AG04449 (cell line): ENCODE measurements at regions of chr11 and their contacts with region 1.

Region 1: GRCh38 chr11:2930704-2931428 is 1.6 kb upstream of the PHLDA2 start:
- DNase-seq: no peak
- H3K4me3 ChIP-seq: peak overlapping the region; percentile 77
- CTCF ChIP-seq: peak; percentile 75

Region 2: DNA sequence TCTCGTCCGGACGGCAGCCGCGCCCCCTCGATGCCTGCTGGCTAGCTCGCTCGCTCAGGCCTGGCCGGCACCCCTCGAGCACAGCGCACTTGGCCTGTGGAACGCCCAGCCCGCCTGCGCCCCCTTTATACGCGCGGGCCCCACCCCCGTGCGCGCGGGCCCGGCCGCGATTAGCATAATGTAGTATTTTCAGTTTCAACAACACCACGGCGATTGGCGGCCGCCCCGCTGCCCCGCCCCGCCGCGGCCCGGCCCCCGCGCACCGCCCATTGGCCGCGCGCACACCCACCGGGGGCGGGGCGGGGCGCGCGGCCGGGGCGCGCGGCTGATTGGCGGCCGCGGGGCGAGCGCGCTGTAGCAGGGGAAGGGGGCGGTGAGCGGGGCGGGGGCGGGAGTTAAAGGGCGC is 45.2 kb before region 1 on chr11 and contains the start of gene CDKN1C:
- CTCF ChIA-PET with region 1: interaction called, 13 read pairs
- POLR2A ChIA-PET with region 1: no interaction called
- DNase-seq: no peak
- H3K4me3 ChIP-seq: peak within 1 kb of the TSS; percentile 63
- CTCF ChIP-seq: no peak

Region 3: GRCh38 chr11:2901854-2902783 is 28.7 kb before region 1 on chr11:
- CTCF ChIA-PET with region 1: interaction called, 5 read pairs
- POLR2A ChIA-PET with region 1: interaction called, 12 read pairs
- DNase-seq: peak; percentile 42
- H3K4me3 ChIP-seq: peak overlapping the region; percentile 75
- CTCF ChIP-seq: no peak

Region 4: DNA sequence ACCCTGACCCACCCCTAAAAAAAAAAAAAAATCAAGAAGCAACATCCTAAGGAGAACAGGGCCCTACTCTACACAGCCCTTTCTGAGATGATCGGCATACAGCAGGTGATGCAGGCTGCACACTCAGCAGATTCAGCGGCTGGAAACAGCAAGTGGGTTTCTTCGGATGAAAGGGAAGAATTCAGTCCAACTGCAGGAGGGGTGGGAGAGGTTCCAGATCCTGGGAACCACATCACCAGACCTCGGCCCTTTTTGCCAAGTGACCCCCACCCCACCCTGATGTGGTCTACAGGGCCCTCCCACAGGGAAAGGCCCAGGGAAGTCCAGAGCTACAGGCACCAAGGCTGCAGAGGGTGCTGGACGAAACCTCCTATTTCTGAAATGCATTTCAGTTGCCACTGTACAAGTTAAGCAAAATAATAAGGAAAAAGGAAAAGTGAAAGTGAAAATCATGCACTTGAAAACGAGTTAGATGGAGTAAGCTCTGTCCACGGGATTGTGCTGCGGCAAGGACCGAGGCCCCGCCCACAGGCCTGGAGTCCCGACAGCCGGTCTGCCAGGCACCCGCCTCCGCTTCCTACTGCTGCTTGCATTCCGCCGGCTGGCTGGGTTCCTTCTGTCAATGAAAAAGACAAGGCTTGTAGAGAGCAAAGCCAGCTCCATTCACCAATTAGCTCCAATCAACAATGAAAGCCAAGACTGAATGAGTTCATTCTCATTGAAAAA is 14.3 kb after region 1 on chr11:
- CTCF ChIA-PET with region 1: interaction called, 16 read pairs
- POLR2A ChIA-PET with region 1: interaction called, 16 read pairs
- DNase-seq: peak; percentile 50
- H3K4me3 ChIP-seq: peak overlapping the region; percentile 40
- CTCF ChIP-seq: no peak

Region 5: GRCh38 chr11:2968341-2968900 is 37.6 kb after region 1 on chr11:
- CTCF ChIA-PET with region 1: no interaction called
- POLR2A ChIA-PET with region 1: no interaction called
- DNase-seq: no peak
- H3K4me3 ChIP-seq: no peak overlapping the region
- CTCF ChIP-seq: no peak

Region 6: GRCh38 chr11:2992234-2992996 is 61.5 kb after region 1 on chr11 and contains the start of gene NAP1L4:
- CTCF ChIA-PET with region 1: interaction called, 6 read pairs
- POLR2A ChIA-PET with region 1: interaction called, 15 read pairs
- DNase-seq: peak; percentile 67
- H3K4me3 ChIP-seq: peak within 1 kb of the TSS; percentile 89
- CTCF ChIP-seq: no peak

Region 7: GRCh38 chr11:3101921-3102640 is 171.2 kb after region 1 on chr11:
- CTCF ChIA-PET with region 1: no interaction called
- POLR2A ChIA-PET with region 1: no interaction called
- DNase-seq: no peak
- H3K4me3 ChIP-seq: no peak overlapping the region
- CTCF ChIP-seq: no peak